Naive thymus-derived CD8-positive, alpha-beta T cell (primary cell): ENCODE measurements at regions of chr20 and their contacts with region 1.

Region 1: DNA sequence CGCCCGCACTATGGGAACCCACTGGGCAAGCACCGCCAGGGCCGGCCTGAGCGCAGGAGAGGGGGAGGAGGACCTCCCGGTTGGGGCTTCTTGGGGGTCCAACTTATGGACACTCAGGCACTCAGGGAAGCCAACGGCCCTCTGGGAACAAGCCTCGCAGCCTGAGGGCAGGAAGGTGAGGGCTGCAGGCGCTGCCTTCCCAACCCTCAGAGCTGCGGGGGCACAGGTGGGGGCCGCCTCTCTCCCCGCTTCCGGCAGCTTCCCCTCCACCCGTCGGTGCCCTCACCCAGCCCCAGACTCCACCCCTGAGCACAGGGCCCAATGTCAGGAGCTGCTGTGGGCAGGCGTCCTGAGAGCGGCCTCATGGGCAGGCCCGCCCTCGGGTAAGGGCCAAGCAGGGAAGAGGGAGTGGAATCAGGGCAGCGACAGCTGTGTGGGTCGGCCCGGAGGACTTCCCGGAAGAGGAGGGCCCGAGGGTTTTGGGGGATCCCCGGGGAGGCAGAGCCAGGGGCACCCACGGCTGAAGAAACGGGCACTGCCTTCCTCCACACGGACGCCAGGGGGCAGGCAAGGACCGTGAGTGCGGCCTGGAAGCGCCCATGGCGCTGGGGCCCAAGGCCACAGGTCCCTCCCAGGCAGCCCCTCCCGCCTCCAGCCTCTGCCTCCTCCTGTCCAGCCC is 488 bp upstream of the PTK6 start:
- DNase-seq: peak; percentile 86 to 96 (median 93)
- ATAC-seq: peak; percentile 91
- H3K4me3 Mint-ChIP-seq: peak overlapping the region; percentile 62 to 82 (median 71)
- H3K27ac Mint-ChIP-seq: peak overlapping the region in 9 of 10 donors; percentile 31 to 93 (median 86)
- H3K4me1 Mint-ChIP-seq: peaks cover 8 to 22% (median 15%) of the 10 kb centered on the region in 4 donors
- H3K27me3 Mint-ChIP-seq: no peaks in the 10 kb centered on the region

Region 2: GRCh38 chr20:63457737-63458136 is 79.9 kb before region 1 on chr20:
- POLR2A ChIA-PET with region 1: no interaction called
- DNase-seq: no peak
- ATAC-seq: peak in 1 of 2 donors; percentile 55
- H3K4me3 Mint-ChIP-seq: no peak overlapping the region
- H3K27ac Mint-ChIP-seq: no peak overlapping the region
- H3K4me1 Mint-ChIP-seq: peaks cover 3 to 21% (median 15%) of the 10 kb centered on the region in 4 donors
- H3K27me3 Mint-ChIP-seq: peaks cover 10 to 59% (median 29%) of the 10 kb centered on the region in 5 donors

Region 3: DNA sequence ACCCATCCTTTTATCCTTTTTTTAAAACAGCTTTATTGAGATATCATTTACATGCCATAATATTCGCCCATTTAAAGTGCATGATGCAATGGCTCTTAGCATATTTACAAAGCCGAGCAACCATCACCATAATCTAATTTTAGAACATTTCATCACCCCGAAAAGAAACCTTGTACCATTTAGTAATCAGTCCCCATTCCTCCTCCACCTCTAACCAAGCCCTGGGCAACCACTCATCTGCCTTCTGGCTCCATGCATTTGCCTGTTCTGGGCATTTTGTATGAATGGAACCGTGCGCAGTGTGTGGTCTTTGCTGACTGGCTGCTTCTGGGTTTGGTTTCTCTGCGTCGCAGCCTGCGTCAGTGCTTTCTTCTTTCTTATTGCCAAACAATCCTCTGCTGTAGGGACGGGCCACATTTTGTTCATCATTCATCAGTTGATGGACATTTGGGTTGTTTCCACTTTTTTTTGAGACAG is 28.5 kb before region 1 on chr20:
- POLR2A ChIA-PET with region 1: no interaction called
- DNase-seq: no peak
- ATAC-seq: no peak
- H3K4me3 Mint-ChIP-seq: no peak overlapping the region
- H3K27ac Mint-ChIP-seq: no peak overlapping the region
- H3K4me1 Mint-ChIP-seq: no peaks in the 10 kb centered on the region
- H3K27me3 Mint-ChIP-seq: peaks cover 19 to 58% (median 34%) of the 10 kb centered on the region in 5 donors

Region 4: DNA sequence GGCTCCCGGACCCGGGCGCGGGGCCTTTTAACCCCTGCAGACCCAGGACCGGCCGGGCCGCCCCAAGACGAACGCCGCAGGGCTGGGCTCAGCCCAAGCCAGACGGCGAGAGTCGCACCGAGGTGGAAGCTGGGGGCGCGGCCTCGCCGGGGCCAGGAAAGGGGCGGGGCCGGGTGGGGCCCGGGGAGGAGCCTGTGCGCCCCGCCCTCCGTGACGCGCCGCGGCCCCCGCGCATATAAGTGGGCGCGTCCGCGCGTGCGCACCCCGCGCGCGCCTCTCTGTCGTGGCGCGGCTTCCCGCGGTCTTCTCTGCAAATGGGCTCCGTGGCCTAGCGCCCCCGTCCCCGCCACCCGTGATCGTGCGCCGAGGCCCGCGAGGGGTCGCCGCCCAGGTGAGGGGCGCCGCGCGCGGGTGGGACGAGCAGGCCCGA is 17.1 kb before region 1 on chr20 and contains the start of gene PPDPF:
- POLR2A ChIA-PET with region 1: interaction called, 174 read pairs
- DNase-seq: peak; percentile 74 to 94 (median 86)
- ATAC-seq: peak; percentile 78
- H3K4me3 Mint-ChIP-seq: peak within 1 kb of the TSS; percentile 74 to 89 (median 82)
- H3K27ac Mint-ChIP-seq: peak within 1 kb of the TSS; percentile 44 to 92 (median 84)
- H3K4me1 Mint-ChIP-seq: peaks cover 12 to 24% (median 14%) of the 10 kb centered on the region in 4 donors
- H3K27me3 Mint-ChIP-seq: peaks cover 0 to 2% (median 0%) of the 10 kb centered on the region in 5 donors
- polyA plus RNA-seq, gene PPDPF: 47.4 to 93.1 (median 78.1) TPM

Region 5: DNA sequence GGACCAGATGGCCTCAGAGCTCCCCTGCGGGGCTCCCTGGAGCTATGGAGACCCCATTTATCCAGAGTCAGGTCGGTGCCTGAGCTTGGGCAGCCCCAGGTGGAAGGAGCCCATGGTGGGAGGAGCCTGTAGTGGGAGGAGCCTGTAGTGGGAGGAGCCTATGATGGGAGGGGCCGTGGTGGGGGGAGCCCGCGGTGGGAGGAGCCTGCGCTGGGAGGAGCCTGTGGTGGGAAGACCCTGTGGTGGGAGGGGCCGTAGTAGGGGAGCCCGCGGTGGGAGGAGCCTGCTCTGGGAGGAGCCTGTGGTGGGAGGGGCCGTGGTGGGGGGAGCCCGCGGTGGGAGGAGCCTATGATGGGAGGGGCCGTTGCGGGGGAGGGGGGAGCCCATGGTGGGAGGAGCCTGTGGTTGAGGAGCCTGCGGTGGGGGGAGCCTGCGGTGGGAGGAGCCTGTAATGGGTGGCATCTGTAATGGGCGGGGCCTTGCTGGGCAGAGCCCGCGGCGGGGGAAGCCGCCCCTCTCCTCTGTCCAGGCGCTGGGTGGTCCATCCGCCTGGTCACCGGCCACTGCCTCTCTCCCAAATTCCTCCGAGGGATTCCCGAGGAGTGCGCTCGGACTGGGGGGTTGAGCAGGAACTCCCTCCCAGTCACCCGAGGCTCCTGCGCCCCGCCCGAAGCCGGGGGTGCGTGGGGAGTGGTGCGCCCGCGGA is 15.7 kb after region 1 on chr20:
- POLR2A ChIA-PET with region 1: interaction called, 26 read pairs
- DNase-seq: peak; percentile 78 to 94 (median 88)
- ATAC-seq: peak; percentile 69 to 73
- H3K4me3 Mint-ChIP-seq: peak overlapping the region; percentile 67 to 85 (median 79)
- H3K27ac Mint-ChIP-seq: peak overlapping the region in 9 of 10 donors; percentile 77 to 97 (median 91)
- H3K4me1 Mint-ChIP-seq: peaks cover 11 to 34% (median 28%) of the 10 kb centered on the region in 4 donors
- H3K27me3 Mint-ChIP-seq: peaks cover 0 to 13% (median 2%) of the 10 kb centered on the region in 5 donors

Region 6: GRCh38 chr20:63612276-63612928 is 74.7 kb after region 1 on chr20:
- POLR2A ChIA-PET with region 1: no interaction called
- DNase-seq: no peak
- ATAC-seq: no peak
- H3K4me3 Mint-ChIP-seq: no peak overlapping the region
- H3K27ac Mint-ChIP-seq: peak overlapping the region in 2 of 10 donors; percentile 25 to 80
- H3K4me1 Mint-ChIP-seq: peaks cover 7 to 20% (median 16%) of the 10 kb centered on the region in 4 donors
- H3K27me3 Mint-ChIP-seq: no peaks in the 10 kb centered on the region

Region 7: DNA sequence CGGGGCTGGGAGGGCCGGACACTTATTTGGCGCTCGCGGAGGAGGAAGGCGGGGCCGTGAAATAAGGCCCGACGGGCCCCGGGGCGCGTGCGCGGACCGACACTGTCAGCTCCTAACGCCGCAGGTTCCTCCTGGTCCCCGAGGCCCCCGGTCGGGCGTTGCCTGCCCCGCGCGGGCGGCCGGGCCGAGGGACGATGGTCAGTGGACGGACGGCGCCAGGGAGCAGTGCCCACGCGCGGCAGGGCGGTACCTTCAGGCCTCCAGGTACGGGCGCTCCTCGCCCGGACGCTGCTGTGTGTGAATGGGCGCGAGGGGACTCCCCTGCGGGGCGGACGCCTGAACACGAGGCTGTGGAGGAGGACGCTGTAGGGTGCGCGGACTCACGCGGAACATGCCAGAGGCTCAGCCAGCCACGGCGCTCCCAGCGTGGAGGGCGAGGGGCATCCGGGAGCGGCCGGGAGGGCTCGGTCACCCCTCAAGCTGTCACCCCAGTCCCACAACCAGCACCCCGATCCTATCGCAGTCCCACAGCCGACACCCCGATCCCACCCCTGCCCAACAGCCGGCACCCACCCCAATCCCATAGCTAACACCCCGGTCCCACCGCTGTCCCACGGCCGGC is 89.6 kb after region 1 on chr20:
- POLR2A ChIA-PET with region 1: interaction called, 25 read pairs
- DNase-seq: peak; percentile 90 to 99 (median 95)
- ATAC-seq: peak; percentile 82 to 83
- H3K4me3 Mint-ChIP-seq: peak overlapping the region; percentile 91 to 99 (median 98)
- H3K27ac Mint-ChIP-seq: peak overlapping the region; percentile 43 to 99 (median 96)
- H3K4me1 Mint-ChIP-seq: peaks cover 16 to 59% (median 45%) of the 10 kb centered on the region in 4 donors
- H3K27me3 Mint-ChIP-seq: no peaks in the 10 kb centered on the region

Region 8: DNA sequence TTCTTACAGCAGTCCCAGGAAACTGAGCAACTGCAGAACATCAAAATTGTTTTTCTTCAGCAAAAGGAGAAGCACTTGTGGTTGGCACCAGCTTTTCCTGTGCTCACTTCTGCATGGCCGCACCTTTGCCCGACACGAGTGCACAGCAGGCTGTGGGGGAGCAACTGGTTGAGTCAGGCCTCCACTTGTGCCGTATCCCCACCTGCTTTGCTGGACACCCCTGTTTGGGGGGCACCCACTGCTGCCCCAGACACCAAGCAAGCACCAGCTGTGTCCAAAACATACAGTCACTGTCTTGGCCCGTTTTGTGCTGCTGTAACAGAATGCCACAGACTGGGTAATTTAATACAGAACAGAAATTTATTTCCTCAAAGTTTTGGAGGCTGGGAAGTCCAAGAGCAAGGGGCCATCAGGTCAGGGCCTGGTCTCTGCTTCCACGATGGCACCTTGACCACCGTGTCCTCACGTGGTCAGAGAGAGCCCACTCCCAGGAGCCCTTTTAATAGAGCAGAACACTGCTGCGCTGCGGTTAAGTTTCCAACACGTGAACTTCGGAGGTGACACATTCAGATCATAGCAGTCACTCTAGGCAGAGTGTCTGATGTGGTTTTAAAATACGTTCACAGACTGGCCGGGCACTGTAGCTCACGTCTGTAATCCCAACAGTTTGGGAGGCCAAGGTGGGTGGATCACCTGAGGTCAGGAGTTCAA is 97.9 kb after region 1 on chr20:
- POLR2A ChIA-PET with region 1: interaction called, 12 read pairs
- DNase-seq: peak; percentile 47 to 93 (median 85)
- ATAC-seq: peak; percentile 61 to 77
- H3K4me3 Mint-ChIP-seq: peak overlapping the region; percentile 75 to 90 (median 82)
- H3K27ac Mint-ChIP-seq: peak overlapping the region; percentile 95 to 100 (median 100)
- H3K4me1 Mint-ChIP-seq: peaks cover 17 to 81% (median 63%) of the 10 kb centered on the region in 4 donors
- H3K27me3 Mint-ChIP-seq: no peaks in the 10 kb centered on the region

Region 9: DNA sequence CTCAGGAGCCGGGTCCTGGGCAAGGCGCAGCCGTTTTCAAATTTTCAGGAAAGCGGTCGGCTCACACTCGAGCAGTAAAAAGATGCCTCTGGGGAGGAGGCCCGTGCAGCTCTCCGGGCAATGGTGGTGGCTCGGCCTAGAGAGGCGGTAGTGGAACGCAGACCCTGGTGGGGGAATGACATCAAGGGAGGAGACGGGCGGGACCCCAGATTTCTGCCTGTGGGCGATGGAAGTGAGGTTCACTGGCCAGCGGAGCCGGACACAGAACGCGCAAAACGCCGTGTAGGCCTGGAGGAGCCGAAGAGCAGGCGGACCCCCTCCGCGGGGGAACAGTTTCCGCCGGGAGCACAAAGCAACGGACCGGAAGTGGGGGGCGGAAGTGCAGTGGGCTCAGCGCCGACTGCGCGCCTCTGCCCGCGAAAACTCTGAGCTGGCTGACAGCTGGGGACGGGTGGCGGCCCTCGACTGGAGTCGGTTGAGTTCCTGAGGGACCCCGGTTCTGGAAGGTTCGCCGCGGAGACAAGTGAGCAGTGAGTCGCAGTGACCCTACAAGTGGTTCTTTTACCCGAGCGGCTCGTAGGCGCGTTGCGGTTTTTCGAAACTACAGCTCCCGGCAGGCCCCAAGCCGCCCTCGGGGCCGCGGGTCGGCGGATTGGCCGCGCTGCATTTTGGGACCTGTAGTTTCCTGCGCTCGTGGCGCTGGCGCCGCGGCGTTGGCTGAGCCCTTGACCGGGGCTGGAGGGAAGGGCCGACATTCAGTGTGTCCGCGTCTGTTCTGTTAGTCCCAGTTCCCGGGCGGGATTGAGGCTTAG is 120.5 kb after region 1 on chr20 and contains the start of gene RTEL1:
- POLR2A ChIA-PET with region 1: interaction called, 16 read pairs
- DNase-seq: peak; percentile 73 to 98 (median 86)
- ATAC-seq: peak; percentile 82 to 85
- H3K4me3 Mint-ChIP-seq: peak within 1 kb of the TSS; percentile 90 to 99 (median 96)
- H3K27ac Mint-ChIP-seq: peak within 1 kb of the TSS; percentile 92 to 98 (median 96)
- H3K4me1 Mint-ChIP-seq: peaks cover 18 to 49% (median 39%) of the 10 kb centered on the region in 4 donors
- H3K27me3 Mint-ChIP-seq: no peaks in the 10 kb centered on the region
- polyA plus RNA-seq, gene RTEL1: 3.2 to 6.8 (median 4.4) TPM

Region 10: GRCh38 chr20:63707549-63708300 is 170.1 kb after region 1 on chr20 and contains the starts of genes ARFRP1 and ZGPAT:
- POLR2A ChIA-PET with region 1: interaction called, 11 read pairs
- DNase-seq: peak; percentile 70 to 88 (median 84)
- ATAC-seq: peak; percentile 81 to 83
- H3K4me3 Mint-ChIP-seq: peak within 1 kb of the TSS; percentile 84 to 95 (median 90)
- H3K27ac Mint-ChIP-seq: peak within 1 kb of the TSS; percentile 88 to 95 (median 92)
- H3K4me1 Mint-ChIP-seq: peaks cover 27 to 60% (median 54%) of the 10 kb centered on the region in 4 donors
- H3K27me3 Mint-ChIP-seq: no peaks in the 10 kb centered on the region
- polyA plus RNA-seq, gene ARFRP1: 60.1 to 92.1 (median 80.9) TPM
- polyA plus RNA-seq, gene ZGPAT: 42.3 to 73.8 (median 47.1) TPM